Astrocyte of the cerebellum (primary cell): ENCODE measurements at regions of chr14 and their contacts with region 1.

Region 1: DNA sequence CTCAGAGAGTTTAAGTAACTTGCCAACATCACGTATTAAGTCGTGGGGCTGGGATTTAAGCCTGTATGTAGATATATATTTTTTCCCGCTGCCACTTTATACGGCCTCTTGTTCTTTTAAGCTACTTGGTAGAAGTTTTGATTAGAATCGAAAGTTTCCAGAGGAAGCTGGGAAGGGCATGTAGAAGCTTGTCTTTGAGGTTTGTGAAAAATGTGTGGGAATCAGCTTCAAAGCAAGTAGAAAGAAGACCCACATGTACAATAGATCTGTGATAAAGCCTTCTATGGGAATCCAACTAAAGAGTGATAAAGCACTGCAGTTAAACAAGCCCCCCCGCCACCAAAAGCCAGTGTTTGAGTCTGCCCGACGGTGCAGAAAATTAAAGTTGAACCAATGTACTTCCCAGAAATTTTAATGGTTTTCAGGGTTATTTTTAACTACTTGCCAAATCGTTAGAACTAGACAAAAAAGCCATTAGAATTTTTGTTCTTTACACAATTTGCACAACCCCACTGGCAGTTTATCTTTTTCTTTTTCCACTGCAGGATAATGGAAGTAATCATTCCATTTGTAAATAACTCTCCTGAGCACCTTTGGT is 25.5 kb downstream of the SERPINA11 start:
- DNase-seq: no peak
- H3K4me3 ChIP-seq: no peak overlapping the region
- CTCF ChIP-seq: no peak

Region 2: DNA sequence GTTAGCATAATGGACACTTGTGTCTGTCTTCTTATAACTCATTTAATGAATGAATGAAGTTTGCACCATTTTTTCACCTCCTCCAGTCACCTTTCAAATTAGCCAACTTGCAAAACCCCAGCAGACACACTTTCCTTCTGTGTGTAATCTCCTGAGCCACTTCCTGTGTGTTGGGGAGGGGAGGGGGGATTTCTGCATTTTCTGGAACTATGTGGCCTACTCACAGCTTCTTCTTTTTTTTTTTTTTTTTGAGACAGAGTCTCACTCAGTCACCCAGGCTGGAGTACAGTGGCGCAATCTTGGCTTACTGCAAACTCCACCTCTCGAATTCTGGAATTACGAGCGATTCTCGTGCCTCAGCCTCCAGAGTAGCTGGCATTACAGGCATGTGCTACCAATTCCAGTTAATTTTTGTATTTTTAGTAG is 34.6 kb before region 1 on chr14:
- in situ Hi-C with region 1: no loop called
- DNase-seq: no peak
- H3K4me3 ChIP-seq: no peak overlapping the region
- CTCF ChIP-seq: no peak

Region 3: DNA sequence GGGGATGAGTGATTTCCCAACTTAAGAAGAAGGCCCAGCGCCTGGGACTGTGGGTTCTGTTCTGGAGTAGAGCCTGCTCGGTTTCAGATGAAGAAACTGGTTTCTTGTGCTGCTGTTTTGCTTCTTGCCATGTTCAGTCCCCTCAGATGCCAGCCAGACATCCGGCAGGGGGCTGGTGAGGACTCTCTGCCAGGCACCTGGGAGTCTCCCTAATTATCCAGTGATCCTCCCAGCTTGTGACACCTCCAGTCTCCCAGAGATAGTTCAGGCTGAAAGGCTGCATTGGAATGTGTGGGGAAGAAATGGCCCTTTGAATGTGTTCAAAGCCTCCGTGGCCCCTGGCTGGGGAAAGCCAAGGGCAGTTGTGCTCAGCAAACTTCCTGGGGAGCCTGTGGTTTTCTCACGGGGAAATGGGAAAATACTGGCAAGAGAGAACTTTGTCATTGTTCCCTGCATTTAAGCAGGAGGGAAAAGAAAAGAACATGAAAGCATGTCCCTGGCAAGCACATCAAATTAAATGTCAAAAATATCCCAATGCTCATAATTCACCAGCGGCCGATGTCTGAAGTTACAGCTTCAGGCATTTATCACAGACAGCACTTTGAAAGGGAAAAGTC is 90.6 kb after region 1 on chr14:
- in situ Hi-C with region 1: loop called (anchors 5 kb)
- DNase-seq: peak; percentile 64
- H3K4me3 ChIP-seq: no peak overlapping the region
- CTCF ChIP-seq: no peak